ENCODE measurements at regions of chr3 and their contacts with region 1.

Region 1: GRCh38 chr3:171980578-171981270 is 58.7 kb upstream of the FNDC3B start:
- DNase-seq: peak in 2 of 4 experiments; percentile 56 to 68
- ATAC-seq: peak; percentile 87
- H3K4me3 ChIP-seq: no peak overlapping the region
- H3K27ac ChIP-seq: peak overlapping the region; percentile 68; the same call in 2 of the 3 replicates
- H3K4me1 ChIP-seq: peaks cover 0 to 44% of the 10 kb centered on the region in 2 experiments; a peak in 3 of 5 replicates
- H3K27me3 ChIP-seq: no peaks in the 10 kb centered on the region
- CTCF ChIP-seq: no peak
- EP300 ChIP-seq: peak; percentile 54; the same call in 1 of the 2 replicates
- POLR2A ChIP-seq: no peak
- RAD21 ChIP-seq: no peak; a peak in 1 of 4 replicates

Region 2: GRCh38 chr3:171967137-171967783 is 13.5 kb before region 1 on chr3:
- CTCF ChIA-PET with region 1: no interaction called
- POLR2A ChIA-PET with region 1: interaction called, 5 read pairs
- in situ Hi-C with region 1: no loop called
- intact Hi-C with region 1: loop called (anchors 2 kb)
- DNase-seq: peak in 2 of 4 experiments; percentile 56 to 71
- ATAC-seq: peak; percentile 80
- H3K4me3 ChIP-seq: no peak overlapping the region
- H3K27ac ChIP-seq: peak overlapping the region; percentile 85
- H3K4me1 ChIP-seq: peaks cover 0 to 33% of the 10 kb centered on the region in 2 experiments; a peak in 3 of 5 replicates
- H3K27me3 ChIP-seq: no peaks in the 10 kb centered on the region
- CTCF ChIP-seq: no peak
- EP300 ChIP-seq: peak; percentile 96
- POLR2A ChIP-seq: no peak
- RAD21 ChIP-seq: peak; percentile 39 to 46